Prostate gland (tissue), 2 donors: ENCODE measurements at regions of chr11 and their contacts with region 1.

Region 1: GRCh38 chr11:207208-207862 is at the starts of genes BET1L and RIC8A:
- DNase-seq: peak; percentile 95
- H3K4me3 ChIP-seq: peak within 1 kb of the TSS; percentile 64 to 98
- H3K27ac ChIP-seq: peak within 1 kb of the TSS; percentile 98 to 99
- H3K4me1 ChIP-seq: peaks cover 18% of the 10 kb centered on the region
- H3K27me3 ChIP-seq: no peaks in the 10 kb centered on the region
- CTCF ChIP-seq: peak in 2 of 4 experiments; percentile 14 to 21
- POLR2A ChIP-seq: peak; percentile 91
- total RNA-seq, gene BET1L: 52.1 to 54.8 TPM
- total RNA-seq, gene RIC8A: 82.3 to 114 TPM

Region 2: GRCh38 chr11:236774-237767 is 29.7 kb after region 1 on chr11 and contains the start of gene PSMD13:
- intact Hi-C with region 1: loop called (anchors 2 kb)
- DNase-seq: peak; percentile 81
- H3K4me3 ChIP-seq: peak within 1 kb of the TSS; percentile 90 to 95
- H3K27ac ChIP-seq: peak within 1 kb of the TSS; percentile 98
- H3K4me1 ChIP-seq: peaks cover 12% of the 10 kb centered on the region
- H3K27me3 ChIP-seq: no peaks in the 10 kb centered on the region
- CTCF ChIP-seq: peak in 1 of 4 experiments; percentile 16
- POLR2A ChIP-seq: peak; percentile 37
- total RNA-seq, gene PSMD13: 87.4 to 129 TPM